ENCODE measurements at regions of chr10 and their contacts with region 1.

Region 1: DNA sequence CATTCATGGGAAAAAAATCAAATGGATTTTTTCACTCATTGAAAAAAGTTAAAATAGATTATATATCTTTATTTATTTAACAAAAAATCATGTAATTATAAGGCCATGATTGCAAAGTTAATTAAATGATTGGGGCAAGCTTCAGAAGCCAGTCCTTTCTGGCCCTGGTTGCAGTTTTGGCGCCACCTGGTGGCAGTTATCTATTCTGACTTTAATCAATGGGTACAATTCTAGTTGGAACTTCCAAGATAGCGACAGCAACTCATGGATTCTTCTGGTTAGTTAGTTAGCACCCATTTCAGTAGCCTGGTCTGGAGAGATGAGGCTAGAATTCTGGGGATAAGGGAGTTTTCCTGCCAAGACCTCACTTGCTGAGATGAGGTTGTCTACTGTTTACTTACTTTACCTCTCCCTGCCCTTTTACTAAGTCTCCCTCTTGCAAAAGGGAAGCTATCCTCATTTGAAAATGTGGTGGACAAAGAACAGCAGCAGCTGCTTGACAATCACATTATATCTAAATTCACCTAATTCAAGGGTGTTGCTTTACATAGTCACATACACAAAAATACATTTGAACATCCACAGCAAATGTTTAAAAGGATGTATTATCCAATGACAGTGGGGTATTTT is 42.3 kb downstream of the NOC3L start:
- DNase-seq: peak; percentile 40
- ATAC-seq: peak; percentile 73
- H3K4me3 ChIP-seq: no peak overlapping the region
- H3K27ac ChIP-seq: no peak overlapping the region
- H3K4me1 ChIP-seq: no peaks in the 10 kb centered on the region
- H3K27me3 ChIP-seq: no peaks in the 10 kb centered on the region
- CTCF ChIP-seq: peak; percentile 71 to 80 (median 80)
- POLR2A ChIP-seq: no peak
- RAD21 ChIP-seq: peak; percentile 75

Region 2: GRCh38 chr10:93916257-93917063 is 403.9 kb before region 1 on chr10:
- CTCF ChIA-PET with region 1: interaction called, 90 read pairs
- POLR2A ChIA-PET with region 1: interaction called, 3 read pairs
- RAD21 ChIA-PET with region 1: interaction called, 6 to 16 read pairs
- intact Hi-C with region 1: loop called (anchors 1 kb)
- DNase-seq: peak; percentile 22
- ATAC-seq: peak; percentile 78
- H3K4me3 ChIP-seq: no peak overlapping the region
- H3K27ac ChIP-seq: no peak overlapping the region
- H3K4me1 ChIP-seq: no peaks in the 10 kb centered on the region
- H3K27me3 ChIP-seq: no peaks in the 10 kb centered on the region
- CTCF ChIP-seq: peak; percentile 51 to 68 (median 60); a peak in 5 of 6 replicates
- POLR2A ChIP-seq: no peak
- RAD21 ChIP-seq: peak; percentile 70

Region 3: GRCh38 chr10:94334857-94335256 is 14.5 kb after region 1 on chr10:
- CTCF ChIA-PET with region 1: interaction called, 16 read pairs
- POLR2A ChIA-PET with region 1: no interaction called
- RAD21 ChIA-PET with region 1: no interaction called
- intact Hi-C with region 1: no loop called
- DNase-seq: no peak
- ATAC-seq: no peak
- H3K4me3 ChIP-seq: no peak overlapping the region
- H3K27ac ChIP-seq: no peak overlapping the region
- H3K4me1 ChIP-seq: no peaks in the 10 kb centered on the region
- H3K27me3 ChIP-seq: no peaks in the 10 kb centered on the region
- CTCF ChIP-seq: no peak
- POLR2A ChIP-seq: no peak
- RAD21 ChIP-seq: no peak

Region 4: DNA sequence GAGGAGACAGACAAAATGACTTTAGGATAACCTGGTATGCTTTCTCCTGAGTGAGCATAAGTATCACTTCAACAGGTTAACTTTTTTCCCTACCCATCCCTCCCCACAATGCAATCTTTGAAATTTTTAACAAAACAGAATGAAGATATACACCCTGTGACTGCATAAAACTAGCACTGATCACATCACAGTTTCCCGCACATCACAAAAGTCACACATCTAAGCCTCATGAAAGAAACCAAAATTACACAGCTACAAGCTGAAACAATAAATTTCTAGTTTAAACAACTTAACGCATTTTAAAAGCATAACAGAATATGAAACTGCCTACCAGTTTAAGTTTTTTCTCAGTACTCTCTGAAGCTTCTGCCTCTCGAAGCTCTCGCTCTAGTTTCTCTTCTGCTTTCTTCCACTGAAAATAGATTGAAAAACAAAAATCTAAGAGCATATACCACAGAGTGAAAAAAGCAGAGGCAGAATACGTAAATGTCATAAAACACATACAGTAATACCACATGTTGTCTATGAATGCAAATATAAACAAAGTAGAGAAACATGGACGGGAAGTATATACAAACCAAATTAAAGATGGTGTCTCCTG is 24.2 kb after region 1 on chr10:
- CTCF ChIA-PET with region 1: interaction called, 16 read pairs
- POLR2A ChIA-PET with region 1: no interaction called
- RAD21 ChIA-PET with region 1: no interaction called
- intact Hi-C with region 1: no loop called
- DNase-seq: no peak
- ATAC-seq: no peak
- H3K4me3 ChIP-seq: no peak overlapping the region
- H3K27ac ChIP-seq: no peak overlapping the region
- H3K4me1 ChIP-seq: no peaks in the 10 kb centered on the region
- H3K27me3 ChIP-seq: no peaks in the 10 kb centered on the region
- CTCF ChIP-seq: no peak
- POLR2A ChIP-seq: no peak
- RAD21 ChIP-seq: no peak

Region 5: DNA sequence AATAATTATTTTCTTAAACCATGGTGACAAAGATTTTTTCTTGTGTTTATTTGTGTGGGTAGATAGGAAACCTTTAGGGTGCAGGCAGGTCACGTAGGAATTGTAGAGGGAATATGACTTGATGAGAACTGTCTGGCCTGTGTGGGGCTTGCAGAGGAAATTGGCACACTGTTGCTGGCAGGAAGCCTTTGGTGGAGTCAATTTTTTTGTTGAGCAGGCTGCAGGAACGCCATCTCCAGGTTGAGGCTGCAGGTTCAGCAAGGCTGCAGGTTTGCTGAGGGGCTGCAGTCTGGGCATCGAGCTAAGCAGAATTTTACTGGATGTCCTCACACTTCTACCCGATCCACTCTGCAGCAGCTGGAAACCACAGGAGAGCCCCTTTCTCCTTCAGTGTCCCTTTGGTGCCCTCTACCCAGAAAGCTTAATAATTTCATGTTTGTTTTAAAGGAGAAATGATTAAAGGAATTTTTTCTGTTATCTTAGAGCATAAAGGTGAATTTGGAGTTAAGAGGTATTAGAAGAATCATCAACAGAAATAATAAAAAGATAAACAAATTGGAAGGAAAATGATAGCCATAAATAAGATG is 119.0 kb after region 1 on chr10:
- CTCF ChIA-PET with region 1: interaction called, 27 read pairs
- POLR2A ChIA-PET with region 1: no interaction called
- RAD21 ChIA-PET with region 1: no interaction called
- intact Hi-C with region 1: no loop called
- DNase-seq: no peak
- ATAC-seq: 0 out of 2 replicates have a peak, but pooled peaks have one; percentile 30
- H3K4me3 ChIP-seq: no peak overlapping the region
- H3K27ac ChIP-seq: no peak overlapping the region
- H3K4me1 ChIP-seq: no peaks in the 10 kb centered on the region
- H3K27me3 ChIP-seq: no peaks in the 10 kb centered on the region
- CTCF ChIP-seq: no peak
- POLR2A ChIP-seq: no peak
- RAD21 ChIP-seq: no peak

Region 6: GRCh38 chr10:95864906-95865813 is 1544.8 kb after region 1 on chr10:
- CTCF ChIA-PET with region 1: no interaction called
- POLR2A ChIA-PET with region 1: no interaction called
- RAD21 ChIA-PET with region 1: no interaction called
- intact Hi-C with region 1: no loop called
- DNase-seq: peak; percentile 48
- ATAC-seq: peak; percentile 98
- H3K4me3 ChIP-seq: no peak overlapping the region
- H3K27ac ChIP-seq: no peak overlapping the region
- H3K4me1 ChIP-seq: no peaks in the 10 kb centered on the region
- H3K27me3 ChIP-seq: no peaks in the 10 kb centered on the region
- CTCF ChIP-seq: peak; percentile 76 to 81 (median 78)
- POLR2A ChIP-seq: no peak
- RAD21 ChIP-seq: peak; percentile 80

Measured in HCT116 (cell line).